ENCODE measurements at regions of chr2 and their contacts with region 1.

Region 1: GRCh38 chr2:234951664-234952269 is at the start of gene SH3BP4:
- DNase-seq: peak; percentile 71
- H3K4me3 Mint-ChIP-seq: peak within 1 kb of the TSS; percentile 80
- H3K27ac Mint-ChIP-seq: peak within 1 kb of the TSS; percentile 94
- H3K4me1 Mint-ChIP-seq: peaks cover 45% of the 10 kb centered on the region
- H3K27me3 Mint-ChIP-seq: no peaks in the 10 kb centered on the region
- CTCF ChIP-seq: no peak
- total RNA-seq, gene SH3BP4: 57.6 and 59.7 TPM in 2 replicates

Region 2: DNA sequence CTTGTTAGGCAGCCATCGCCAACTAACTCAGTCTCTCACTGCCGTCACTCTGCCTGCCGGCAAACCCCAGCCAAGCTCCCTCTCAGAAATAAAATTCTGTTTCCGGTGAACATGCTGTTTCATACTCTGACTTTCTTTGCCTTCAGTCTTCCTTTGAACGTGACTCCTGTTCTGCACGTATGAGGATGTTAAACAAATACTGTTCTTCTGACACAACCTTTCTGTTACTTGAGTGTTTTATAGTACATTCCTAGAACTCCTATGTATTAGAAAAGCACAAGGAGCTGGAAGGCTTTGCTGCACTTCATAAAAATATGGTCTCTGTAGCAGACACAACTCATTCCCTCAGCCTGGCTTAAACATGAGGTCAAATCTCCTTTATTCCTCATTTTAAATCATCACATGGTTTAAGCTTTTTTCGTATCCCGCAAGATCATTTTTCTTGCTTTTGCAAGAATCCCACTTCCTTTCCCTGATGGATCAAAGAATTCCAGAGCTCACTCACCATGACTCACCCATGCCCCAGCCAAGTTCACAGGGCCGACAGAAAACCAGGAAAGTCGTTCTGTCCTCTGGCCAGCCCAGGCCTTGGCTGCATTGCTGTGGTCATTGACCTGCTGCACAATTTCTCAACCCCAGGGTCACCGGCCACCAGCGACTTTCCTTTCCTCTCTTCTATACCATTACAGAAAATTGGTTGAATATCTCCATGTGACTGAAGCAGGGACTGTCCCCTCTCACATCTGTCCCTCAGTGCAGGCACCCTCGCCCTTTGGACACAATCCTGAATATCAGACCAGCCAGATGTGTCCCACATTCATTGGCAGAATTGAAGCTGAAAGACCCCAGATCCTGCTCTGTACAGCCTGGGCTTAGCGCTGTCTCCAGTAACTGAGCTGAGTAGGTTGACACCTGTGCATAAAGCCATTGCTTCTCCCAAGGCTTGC is 271.8 kb before region 1 on chr2:
- CTCF ChIA-PET with region 1: no interaction called
- POLR2A ChIA-PET with region 1: no interaction called
- intact Hi-C with region 1: loop called (anchors 10 kb)
- DNase-seq: peak; percentile 93
- H3K4me3 Mint-ChIP-seq: no peak overlapping the region
- H3K27ac Mint-ChIP-seq: no peak overlapping the region
- H3K4me1 Mint-ChIP-seq: peaks cover 17% of the 10 kb centered on the region
- H3K27me3 Mint-ChIP-seq: no peaks in the 10 kb centered on the region
- CTCF ChIP-seq: no peak

Region 3: GRCh38 chr2:234963773-234964615 is 12.2 kb after region 1 on chr2:
- CTCF ChIA-PET with region 1: no interaction called
- POLR2A ChIA-PET with region 1: interaction called, 35 read pairs
- intact Hi-C with region 1: no loop called
- DNase-seq: peak; percentile 97
- H3K4me3 Mint-ChIP-seq: peak overlapping the region; percentile 33
- H3K27ac Mint-ChIP-seq: no peak overlapping the region
- H3K4me1 Mint-ChIP-seq: peaks cover 28% of the 10 kb centered on the region
- H3K27me3 Mint-ChIP-seq: no peaks in the 10 kb centered on the region
- CTCF ChIP-seq: no peak

Region 4: DNA sequence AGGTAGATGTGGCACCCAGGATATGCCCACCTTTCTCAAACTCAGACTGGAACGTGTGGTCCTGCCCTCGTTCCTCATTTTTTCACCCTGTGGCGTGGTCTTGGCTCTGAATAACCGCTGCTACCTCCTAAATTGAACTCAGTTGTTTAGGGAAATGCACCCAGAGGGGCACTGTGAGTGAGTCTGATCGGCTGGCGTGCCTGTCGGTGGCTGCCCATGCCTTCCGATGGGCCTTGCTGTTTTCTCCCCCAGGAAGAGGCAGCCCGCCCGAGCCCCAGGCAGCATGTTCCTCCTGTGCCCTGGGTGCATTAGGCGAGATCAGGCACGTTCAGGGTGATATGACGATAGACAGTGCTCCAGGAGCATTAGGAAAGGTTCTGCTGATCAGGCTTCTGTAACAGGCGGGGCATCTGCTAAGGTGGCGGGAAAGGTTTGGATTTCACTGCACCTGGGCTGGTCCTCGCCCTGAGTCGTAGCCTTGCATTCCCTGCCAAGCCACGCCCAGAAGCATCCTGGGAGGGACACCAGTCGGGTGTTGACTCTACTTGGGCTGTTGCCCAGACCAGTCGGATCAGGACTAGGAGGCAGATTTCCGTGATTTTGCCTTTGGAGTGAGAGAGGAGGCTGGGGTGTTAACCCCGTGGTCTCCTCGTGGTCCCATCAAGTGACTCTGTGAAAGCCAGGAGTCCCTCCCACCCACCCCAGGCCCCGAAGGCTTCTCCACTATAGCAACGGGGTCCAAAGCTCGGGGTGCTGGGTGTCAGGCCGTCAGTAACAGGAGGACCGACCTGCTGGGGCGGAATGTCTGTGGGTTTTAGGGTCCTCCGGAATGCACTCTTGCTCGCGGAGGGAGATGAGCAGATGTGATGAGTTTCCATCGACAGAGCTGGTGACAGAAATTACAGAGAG is 75.1 kb after region 1 on chr2:
- CTCF ChIA-PET with region 1: interaction called, 3 read pairs
- POLR2A ChIA-PET with region 1: interaction called, 98 read pairs
- intact Hi-C with region 1: no loop called
- DNase-seq: peak; percentile 99
- H3K4me3 Mint-ChIP-seq: peak overlapping the region; percentile 71
- H3K27ac Mint-ChIP-seq: peak overlapping the region; percentile 93
- H3K4me1 Mint-ChIP-seq: peaks cover 59% of the 10 kb centered on the region
- H3K27me3 Mint-ChIP-seq: no peaks in the 10 kb centered on the region
- CTCF ChIP-seq: no peak

Region 5: DNA sequence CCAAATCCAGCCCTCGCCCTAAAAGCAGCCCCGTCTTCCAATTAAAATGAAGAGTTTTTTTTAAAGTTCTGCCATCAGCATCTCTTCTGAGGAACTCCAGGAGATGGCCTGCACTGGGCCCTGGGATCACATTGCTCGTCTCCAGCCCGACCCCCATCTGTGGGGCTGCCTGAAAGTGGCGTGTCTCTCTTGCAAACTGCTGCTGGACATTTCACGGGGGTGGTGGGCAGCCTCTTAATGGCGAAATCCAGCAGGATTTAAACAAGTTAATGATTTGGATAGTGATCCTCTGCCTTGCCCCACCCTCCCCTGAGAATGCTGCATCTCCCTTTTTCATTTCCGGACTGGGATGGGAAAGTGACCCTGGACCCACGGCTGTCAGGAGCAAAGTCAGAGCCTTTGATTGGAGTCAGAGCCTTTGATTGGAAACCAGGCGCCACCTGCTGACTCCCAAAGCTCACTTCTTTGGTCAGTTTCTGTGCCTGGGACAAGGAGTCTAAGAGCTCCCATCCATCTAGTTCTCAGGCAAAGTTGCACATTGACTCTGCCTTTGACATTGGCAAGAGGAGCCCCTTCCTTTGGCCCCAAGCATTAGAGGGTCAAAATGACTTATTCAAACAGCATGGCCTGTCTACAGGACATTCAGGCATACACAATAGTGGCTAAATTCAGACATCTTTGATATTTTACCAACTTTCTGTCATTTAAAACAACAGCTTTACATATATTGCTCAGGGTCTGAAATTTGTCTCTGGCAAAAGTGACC is 155.3 kb after region 1 on chr2:
- CTCF ChIA-PET with region 1: interaction called, 6 read pairs
- POLR2A ChIA-PET with region 1: interaction called, 3 read pairs
- intact Hi-C with region 1: loop called (anchors 5 kb)
- DNase-seq: peak; percentile 83
- H3K4me3 Mint-ChIP-seq: no peak overlapping the region
- H3K27ac Mint-ChIP-seq: no peak overlapping the region
- H3K4me1 Mint-ChIP-seq: no peaks in the 10 kb centered on the region
- H3K27me3 Mint-ChIP-seq: no peaks in the 10 kb centered on the region
- CTCF ChIP-seq: peak; percentile 79

Region 6: DNA sequence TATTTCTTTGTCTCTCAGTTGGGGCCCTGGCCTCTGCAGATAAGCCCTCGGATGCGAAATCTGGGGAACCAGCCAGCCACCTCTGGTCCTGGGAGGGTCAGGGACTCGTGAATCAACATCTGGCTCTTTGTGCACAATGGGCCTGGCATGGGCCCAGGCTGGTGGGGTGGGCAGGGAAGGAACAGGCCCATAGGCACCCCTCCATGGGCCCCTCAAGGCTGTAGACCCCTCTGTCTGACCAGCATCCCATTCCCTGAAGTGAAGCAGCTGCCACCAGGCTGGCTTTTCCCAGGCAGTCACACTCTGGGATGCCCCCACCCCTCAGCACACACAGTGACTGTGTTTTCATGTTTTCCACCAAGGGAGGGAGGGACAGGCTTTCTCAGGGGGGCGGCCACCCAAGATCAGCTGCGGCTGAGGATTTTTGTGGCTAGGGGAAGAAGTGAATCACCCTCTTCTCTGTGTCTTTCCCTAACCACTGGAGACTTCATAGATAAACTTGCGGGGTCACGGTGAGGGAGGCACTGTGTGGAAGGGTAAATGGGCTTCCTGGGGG is 708.1 kb after region 1 on chr2:
- CTCF ChIA-PET with region 1: no interaction called
- POLR2A ChIA-PET with region 1: no interaction called
- intact Hi-C with region 1: no loop called
- DNase-seq: no peak
- H3K4me3 Mint-ChIP-seq: no peak overlapping the region
- H3K27ac Mint-ChIP-seq: no peak overlapping the region
- H3K4me1 Mint-ChIP-seq: peaks cover 5% of the 10 kb centered on the region
- H3K27me3 Mint-ChIP-seq: no peaks in the 10 kb centered on the region
- CTCF ChIP-seq: no peak

Measured in MCF 10A (cell line).